A673 (cell line): ENCODE measurements at regions of chr22 and their contacts with region 1.

Region 1: DNA sequence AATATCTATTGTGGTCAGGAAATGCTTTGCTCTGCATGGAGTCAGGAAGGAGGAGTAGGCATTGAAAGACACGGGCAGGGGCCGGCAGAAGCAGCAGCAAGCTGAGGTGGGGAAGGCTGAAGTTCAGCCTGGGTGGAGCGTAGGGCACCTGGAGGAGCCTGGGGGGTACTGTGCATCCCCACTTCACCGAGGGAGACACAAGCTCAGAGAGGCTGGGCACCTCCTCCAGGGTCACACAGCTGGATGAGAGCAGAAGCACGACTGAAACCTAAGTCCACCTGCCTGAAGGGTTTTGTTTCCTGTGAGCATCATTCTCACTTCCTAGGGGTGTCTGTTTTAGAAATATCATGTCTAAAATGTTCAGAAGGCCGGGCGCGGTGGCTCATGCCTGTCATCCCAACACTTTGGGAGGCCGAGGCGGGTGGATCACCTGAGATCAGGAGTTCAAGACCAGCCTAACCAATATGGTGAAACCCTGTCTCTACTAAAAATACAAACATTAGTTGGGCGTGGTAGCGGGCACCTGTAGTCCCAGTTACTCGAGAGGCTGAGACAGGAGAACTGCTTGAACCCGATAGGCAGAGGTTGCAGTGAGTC is 138.3 kb downstream of the MPPED1 start:
- DNase-seq: no peak
- H3K4me3 ChIP-seq: no peak overlapping the region
- H3K27ac ChIP-seq: no peak overlapping the region
- H3K4me1 ChIP-seq: peaks cover 10% of the 10 kb centered on the region
- H3K27me3 ChIP-seq: no peaks in the 10 kb centered on the region
- CTCF ChIP-seq: no peak

Region 2: GRCh38 chr22:42743501-42743991 is 806.6 kb before region 1 on chr22:
- CTCF ChIA-PET with region 1: no interaction called
- POLR2A ChIA-PET with region 1: no interaction called
- intact Hi-C with region 1: no loop called
- DNase-seq: peak; percentile 46
- H3K4me3 ChIP-seq: no peak overlapping the region
- H3K27ac ChIP-seq: peak overlapping the region; percentile 65
- H3K4me1 ChIP-seq: peaks cover 6% of the 10 kb centered on the region
- H3K27me3 ChIP-seq: no peaks in the 10 kb centered on the region
- CTCF ChIP-seq: no peak

Region 3: DNA sequence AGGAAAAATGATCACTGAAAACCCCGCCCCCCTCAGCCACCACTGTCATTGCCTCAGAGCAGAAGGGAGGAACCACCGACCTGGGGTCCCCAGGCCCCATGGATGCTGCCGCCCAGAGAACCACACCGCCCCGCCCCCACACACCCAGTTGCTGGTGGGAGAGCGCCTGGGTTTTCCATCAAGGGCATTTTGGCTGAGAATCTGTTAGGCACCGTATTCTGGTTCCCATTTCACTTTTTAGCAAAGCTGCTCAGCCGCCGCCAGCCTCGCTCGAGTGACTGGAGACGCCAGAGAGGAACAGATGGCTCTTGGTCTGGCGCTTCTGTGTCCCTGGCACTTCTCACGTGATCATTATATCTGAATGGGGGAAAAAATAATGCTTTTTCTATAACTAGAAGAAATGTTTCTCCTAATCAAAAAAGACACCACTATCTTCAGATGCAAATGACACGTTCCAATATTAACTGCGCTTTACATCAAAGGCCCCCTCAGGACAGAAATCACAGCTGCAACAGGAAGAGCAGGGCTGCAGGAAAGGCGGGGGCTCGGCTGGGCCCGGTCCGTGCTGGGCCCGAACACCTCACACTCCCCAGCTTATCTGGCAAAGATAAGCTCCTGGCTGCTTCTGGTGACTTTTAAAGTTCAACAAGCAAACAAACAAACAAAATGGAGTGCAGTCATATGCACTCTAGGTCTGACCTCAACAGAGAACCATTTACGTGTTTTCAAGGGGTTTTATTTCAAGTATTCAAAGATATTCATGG is 11.5 kb after region 1 on chr22:
- CTCF ChIA-PET with region 1: no interaction called
- POLR2A ChIA-PET with region 1: no interaction called
- intact Hi-C with region 1: no loop called
- DNase-seq: no peak
- H3K4me3 ChIP-seq: no peak overlapping the region
- H3K27ac ChIP-seq: no peak overlapping the region
- H3K4me1 ChIP-seq: no peaks in the 10 kb centered on the region
- H3K27me3 ChIP-seq: no peaks in the 10 kb centered on the region
- CTCF ChIP-seq: no peak

Region 4: GRCh38 chr22:43643387-43643786 is 93.3 kb after region 1 on chr22:
- CTCF ChIA-PET with region 1: interaction called, 10 read pairs
- POLR2A ChIA-PET with region 1: no interaction called
- intact Hi-C with region 1: no loop called
- DNase-seq: no peak
- H3K4me3 ChIP-seq: no peak overlapping the region
- H3K27ac ChIP-seq: no peak overlapping the region
- H3K4me1 ChIP-seq: no peaks in the 10 kb centered on the region
- H3K27me3 ChIP-seq: no peaks in the 10 kb centered on the region
- CTCF ChIP-seq: no peak